ENCODE measurements at regions of chr7 and their contacts with region 1.

Region 1: GRCh38 chr7:77460057-77460486 is 43.9 kb upstream of the GSAP start:
- DNase-seq: no peak
- ATAC-seq: no peak
- H3K4me3 ChIP-seq: no peak overlapping the region
- H3K4me3 Mint-ChIP-seq: no peak overlapping the region
- H3K27ac ChIP-seq: no peak overlapping the region
- H3K27ac Mint-ChIP-seq: no peak overlapping the region
- H3K4me1 ChIP-seq: peaks cover 3 to 7% of the 10 kb centered on the region in 2 donors
- H3K4me1 Mint-ChIP-seq: peaks cover 15% of the 10 kb centered on the region
- H3K27me3 ChIP-seq: no peaks in the 10 kb centered on the region
- H3K27me3 Mint-ChIP-seq: no peaks in the 10 kb centered on the region
- CTCF ChIP-seq: no peak

Region 2: GRCh38 chr7:77293046-77293445 is 167.0 kb before region 1 on chr7:
- CTCF ChIA-PET with region 1: no interaction called
- POLR2A ChIA-PET with region 1: no interaction called
- intact Hi-C with region 1: no loop called
- DNase-seq: no peak
- ATAC-seq: no peak
- H3K4me3 ChIP-seq: no peak overlapping the region
- H3K4me3 Mint-ChIP-seq: no peak overlapping the region
- H3K27ac ChIP-seq: no peak overlapping the region
- H3K27ac Mint-ChIP-seq: no peak overlapping the region
- H3K4me1 ChIP-seq: peaks cover 11 to 13% of the 10 kb centered on the region in 2 donors
- H3K4me1 Mint-ChIP-seq: peaks cover 15% of the 10 kb centered on the region
- H3K27me3 ChIP-seq: no peaks in the 10 kb centered on the region
- H3K27me3 Mint-ChIP-seq: no peaks in the 10 kb centered on the region
- CTCF ChIP-seq: no peak

Region 3: DNA sequence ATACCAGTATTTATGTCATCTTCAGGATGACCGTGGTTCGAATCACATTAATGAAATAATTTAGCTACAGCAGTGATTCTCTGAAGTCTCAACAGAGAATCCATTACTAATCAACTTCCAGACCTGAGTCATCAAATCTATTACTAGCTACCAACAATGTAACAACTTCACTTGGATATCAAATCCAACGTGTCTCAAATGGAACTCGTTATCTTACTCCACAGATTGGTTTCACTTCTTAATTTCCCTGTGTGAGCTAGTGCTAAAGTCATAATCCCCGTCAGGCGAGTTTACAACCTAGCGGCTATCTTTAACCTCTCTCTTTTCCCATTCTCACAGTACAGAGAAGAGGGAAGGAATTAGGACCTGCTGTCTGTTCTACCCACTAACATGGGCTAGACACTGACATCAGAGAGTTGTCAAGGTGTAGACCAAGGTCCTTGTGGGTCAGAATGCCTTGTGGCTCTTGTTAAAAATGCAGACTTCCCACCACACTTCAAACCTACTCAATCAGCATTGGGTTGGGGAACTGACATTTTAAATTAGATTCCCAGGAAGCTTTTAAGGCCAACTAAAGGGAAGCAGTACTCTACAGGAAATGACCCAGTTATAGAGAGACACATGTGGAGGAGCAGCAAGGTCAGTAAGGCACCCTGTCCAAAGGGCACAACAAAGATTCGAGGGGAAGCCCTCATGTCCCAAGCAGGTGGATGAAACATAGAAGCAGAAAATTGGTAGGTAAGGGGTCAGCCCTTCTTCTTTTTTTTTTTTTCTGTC is 13.3 kb after region 1 on chr7:
- CTCF ChIA-PET with region 1: no interaction called
- POLR2A ChIA-PET with region 1: no interaction called
- intact Hi-C with region 1: no loop called
- DNase-seq: no peak
- ATAC-seq: no peak
- H3K4me3 ChIP-seq: no peak overlapping the region
- H3K4me3 Mint-ChIP-seq: peak overlapping the region; percentile 68
- H3K27ac ChIP-seq: no peak overlapping the region
- H3K27ac Mint-ChIP-seq: no peak overlapping the region
- H3K4me1 ChIP-seq: no peaks in the 10 kb centered on the region
- H3K4me1 Mint-ChIP-seq: peaks cover 5% of the 10 kb centered on the region
- H3K27me3 ChIP-seq: no peaks in the 10 kb centered on the region
- H3K27me3 Mint-ChIP-seq: no peaks in the 10 kb centered on the region
- CTCF ChIP-seq: no peak

Region 4: GRCh38 chr7:77484785-77485184 is 24.7 kb after region 1 on chr7:
- CTCF ChIA-PET with region 1: no interaction called
- POLR2A ChIA-PET with region 1: no interaction called
- intact Hi-C with region 1: no loop called
- DNase-seq: no peak
- ATAC-seq: no peak
- H3K4me3 ChIP-seq: no peak overlapping the region
- H3K4me3 Mint-ChIP-seq: no peak overlapping the region
- H3K27ac ChIP-seq: no peak overlapping the region
- H3K27ac Mint-ChIP-seq: no peak overlapping the region
- H3K4me1 ChIP-seq: no peaks in the 10 kb centered on the region
- H3K4me1 Mint-ChIP-seq: peaks cover 3% of the 10 kb centered on the region
- H3K27me3 ChIP-seq: peaks cover 0 to 3% (median 0%) of the 10 kb centered on the region in 4 experiments
- H3K27me3 Mint-ChIP-seq: peaks cover 5% of the 10 kb centered on the region
- CTCF ChIP-seq: no peak

Region 5: GRCh38 chr7:77525231-77525630 is 65.2 kb after region 1 on chr7:
- CTCF ChIA-PET with region 1: no interaction called
- POLR2A ChIA-PET with region 1: no interaction called
- intact Hi-C with region 1: loop called (anchors 10 kb)
- DNase-seq: no peak
- ATAC-seq: no peak
- H3K4me3 ChIP-seq: no peak overlapping the region
- H3K4me3 Mint-ChIP-seq: no peak overlapping the region
- H3K27ac ChIP-seq: no peak overlapping the region
- H3K27ac Mint-ChIP-seq: no peak overlapping the region
- H3K4me1 ChIP-seq: peaks cover 9 to 11% of the 10 kb centered on the region in 2 donors
- H3K4me1 Mint-ChIP-seq: peaks cover 14% of the 10 kb centered on the region
- H3K27me3 ChIP-seq: no peaks in the 10 kb centered on the region
- H3K27me3 Mint-ChIP-seq: no peaks in the 10 kb centered on the region
- CTCF ChIP-seq: no peak

Region 6: GRCh38 chr7:77570330-77571011 is 110.4 kb after region 1 on chr7:
- CTCF ChIA-PET with region 1: no interaction called
- POLR2A ChIA-PET with region 1: no interaction called
- intact Hi-C with region 1: loop called (anchors 10 kb)
- DNase-seq: no peak
- ATAC-seq: no peak
- H3K4me3 ChIP-seq: no peak overlapping the region
- H3K4me3 Mint-ChIP-seq: no peak overlapping the region
- H3K27ac ChIP-seq: no peak overlapping the region
- H3K27ac Mint-ChIP-seq: no peak overlapping the region
- H3K4me1 ChIP-seq: no peaks in the 10 kb centered on the region
- H3K4me1 Mint-ChIP-seq: peaks cover 10% of the 10 kb centered on the region
- H3K27me3 ChIP-seq: no peaks in the 10 kb centered on the region
- H3K27me3 Mint-ChIP-seq: no peaks in the 10 kb centered on the region
- CTCF ChIP-seq: no peak

Measured in B cell (primary cell).